Left lung (tissue), 14 donors: ENCODE measurements at regions of chr4 and their contacts with region 1.

Region 1: GRCh38 chr4:127732613-127733328 is 2.6 kb downstream of the SLC25A31 start:
- DNase-seq: peak in 2 of 4 donors; percentile 20 to 32
- ATAC-seq: peak; percentile 80
- H3K4me3 ChIP-seq: no peak overlapping the region
- H3K27ac ChIP-seq: no peak overlapping the region
- H3K4me1 ChIP-seq: no peaks in the 10 kb centered on the region
- H3K27me3 ChIP-seq: no peaks in the 10 kb centered on the region
- CTCF ChIP-seq: peak; percentile 11 to 54

Region 2: GRCh38 chr4:127370604-127371003 is 362.2 kb before region 1 on chr4:
- intact Hi-C with region 1: no loop called
- DNase-seq: peak in 3 of 4 donors; percentile 47 to 83 (median 80)
- ATAC-seq: peak; percentile 82
- H3K4me3 ChIP-seq: no peak overlapping the region
- H3K27ac ChIP-seq: peak overlapping the region in 1 of 2 donors; percentile 28
- H3K4me1 ChIP-seq: peaks cover 0 to 6% of the 10 kb centered on the region in 2 donors
- H3K27me3 ChIP-seq: no peaks in the 10 kb centered on the region
- CTCF ChIP-seq: no peak

Region 3: DNA sequence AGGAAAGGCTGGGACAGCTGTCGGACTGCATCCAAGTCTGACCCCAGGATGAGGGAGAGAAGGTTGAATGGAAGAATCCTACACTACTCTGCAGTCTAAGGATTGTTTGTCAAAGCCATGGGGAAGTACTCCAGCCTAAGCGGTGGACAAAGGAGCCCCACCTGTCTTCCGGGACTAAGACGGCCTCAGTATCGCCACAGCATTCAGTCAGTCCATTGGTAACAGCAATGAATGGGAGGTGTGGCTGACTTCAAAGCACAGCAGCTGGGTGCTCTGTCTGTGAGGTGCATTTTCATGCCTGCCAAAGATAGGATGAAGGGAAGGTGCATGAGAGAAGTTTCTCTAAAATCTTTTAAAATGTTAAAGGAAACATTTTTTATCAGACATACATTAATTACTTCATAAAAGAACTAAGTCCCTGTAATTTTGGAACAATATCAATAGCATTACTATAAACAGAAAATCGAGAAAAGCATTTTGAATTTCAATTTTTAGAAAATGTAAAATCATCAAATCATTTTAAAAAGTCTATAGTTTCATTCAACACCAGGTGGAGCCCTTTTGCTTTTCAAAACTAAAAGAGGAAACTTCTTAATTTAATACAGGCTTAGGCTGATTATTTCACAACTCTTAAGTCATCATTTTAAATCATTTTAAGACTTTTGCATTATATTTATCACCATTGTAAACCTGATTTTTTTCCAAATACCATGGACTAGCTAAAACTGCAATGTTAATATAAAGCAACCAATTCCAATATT is 127.6 kb before region 1 on chr4:
- intact Hi-C with region 1: loop called in 1 of 2 experiments (anchors 2 kb)
- DNase-seq: peak in 1 of 4 donors; percentile 37
- ATAC-seq: peak; percentile 62
- H3K4me3 ChIP-seq: no peak overlapping the region
- H3K27ac ChIP-seq: no peak overlapping the region
- H3K4me1 ChIP-seq: no peaks in the 10 kb centered on the region
- H3K27me3 ChIP-seq: peaks cover 5 to 8% of the 10 kb centered on the region in 2 donors
- CTCF ChIP-seq: peak; percentile 37 to 54

Region 4: DNA sequence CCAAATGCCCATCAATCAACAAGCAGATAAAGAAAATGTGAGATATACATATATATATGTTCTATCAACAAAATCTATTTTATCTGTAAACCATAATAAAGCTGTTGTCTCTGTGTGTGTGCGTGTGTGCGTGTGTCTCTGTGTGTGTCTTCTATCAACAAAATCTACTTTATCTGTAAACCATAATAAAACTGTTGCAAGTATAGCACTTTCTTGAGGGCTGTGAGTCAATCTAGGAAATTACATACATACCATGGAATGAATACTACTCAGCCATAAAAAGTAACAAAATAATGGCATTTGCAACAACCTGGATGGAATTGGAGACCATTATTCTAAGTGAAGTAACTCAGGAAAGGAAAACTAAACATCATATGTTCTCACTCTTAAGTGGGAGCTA is 135.4 kb after region 1 on chr4:
- intact Hi-C with region 1: no loop called
- DNase-seq: no peak
- ATAC-seq: no peak
- H3K4me3 ChIP-seq: no peak overlapping the region
- H3K27ac ChIP-seq: no peak overlapping the region
- H3K4me1 ChIP-seq: peaks cover 3 to 12% of the 10 kb centered on the region in 2 donors
- H3K27me3 ChIP-seq: no peaks in the 10 kb centered on the region
- CTCF ChIP-seq: no peak